ENCODE measurements at regions of chr1 and their contacts with region 1.

Region 1: DNA sequence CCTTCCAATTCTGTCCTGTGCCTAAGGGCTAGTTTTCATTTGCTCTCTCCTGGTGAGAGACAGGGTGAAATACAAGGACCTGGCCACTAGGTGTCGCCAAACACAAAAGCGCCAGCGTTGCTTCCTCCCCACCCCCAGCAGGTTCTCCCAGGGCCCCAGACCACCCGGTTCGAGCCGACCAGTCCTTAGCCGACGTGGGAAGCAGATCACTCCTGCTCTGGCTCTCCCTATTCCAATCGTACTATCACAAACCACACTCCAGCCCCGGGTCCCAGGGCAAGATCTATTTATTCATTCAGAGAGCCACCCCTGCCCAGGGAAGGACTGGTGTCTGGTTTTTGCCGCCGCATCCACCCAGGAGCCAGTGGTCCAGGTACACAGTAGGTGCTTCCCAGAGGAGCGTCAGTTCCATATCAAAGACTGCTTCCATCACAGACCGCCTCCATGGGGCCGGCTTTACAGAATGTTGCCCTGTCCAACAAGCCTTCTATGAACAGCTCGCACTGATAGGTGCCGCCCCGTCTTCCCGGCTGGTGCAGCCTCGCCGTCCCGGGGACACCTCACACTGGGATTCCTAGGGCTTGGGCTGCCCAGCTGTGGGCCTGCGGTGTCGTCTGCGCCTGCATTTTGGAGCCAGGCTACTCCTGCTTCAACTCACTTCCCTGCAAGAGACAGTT is 35.0 kb downstream of the CTNNBIP1 start:
- DNase-seq: peak; percentile 71
- H3K4me3 ChIP-seq: no peak overlapping the region
- H3K27ac ChIP-seq: no peak overlapping the region
- H3K4me1 ChIP-seq: no peaks in the 10 kb centered on the region
- H3K27me3 ChIP-seq: no peaks in the 10 kb centered on the region
- CTCF ChIP-seq: peak; percentile 85 to 92
- POLR2A ChIP-seq: no peak

Region 2: GRCh38 chr1:9890224-9890731 is 15.2 kb after region 1 on chr1:
- CTCF ChIA-PET with region 1: interaction called, 6 read pairs
- POLR2A ChIA-PET with region 1: no interaction called
- dilution Hi-C with region 1: no loop called
- intact Hi-C with region 1: loop called (anchors 2 kb)
- DNase-seq: peak; percentile 63
- H3K4me3 ChIP-seq: no peak overlapping the region
- H3K27ac ChIP-seq: peak overlapping the region; percentile 52
- H3K4me1 ChIP-seq: peaks cover 43% of the 10 kb centered on the region
- H3K27me3 ChIP-seq: no peaks in the 10 kb centered on the region
- CTCF ChIP-seq: no peak
- POLR2A ChIP-seq: no peak

Region 3: DNA sequence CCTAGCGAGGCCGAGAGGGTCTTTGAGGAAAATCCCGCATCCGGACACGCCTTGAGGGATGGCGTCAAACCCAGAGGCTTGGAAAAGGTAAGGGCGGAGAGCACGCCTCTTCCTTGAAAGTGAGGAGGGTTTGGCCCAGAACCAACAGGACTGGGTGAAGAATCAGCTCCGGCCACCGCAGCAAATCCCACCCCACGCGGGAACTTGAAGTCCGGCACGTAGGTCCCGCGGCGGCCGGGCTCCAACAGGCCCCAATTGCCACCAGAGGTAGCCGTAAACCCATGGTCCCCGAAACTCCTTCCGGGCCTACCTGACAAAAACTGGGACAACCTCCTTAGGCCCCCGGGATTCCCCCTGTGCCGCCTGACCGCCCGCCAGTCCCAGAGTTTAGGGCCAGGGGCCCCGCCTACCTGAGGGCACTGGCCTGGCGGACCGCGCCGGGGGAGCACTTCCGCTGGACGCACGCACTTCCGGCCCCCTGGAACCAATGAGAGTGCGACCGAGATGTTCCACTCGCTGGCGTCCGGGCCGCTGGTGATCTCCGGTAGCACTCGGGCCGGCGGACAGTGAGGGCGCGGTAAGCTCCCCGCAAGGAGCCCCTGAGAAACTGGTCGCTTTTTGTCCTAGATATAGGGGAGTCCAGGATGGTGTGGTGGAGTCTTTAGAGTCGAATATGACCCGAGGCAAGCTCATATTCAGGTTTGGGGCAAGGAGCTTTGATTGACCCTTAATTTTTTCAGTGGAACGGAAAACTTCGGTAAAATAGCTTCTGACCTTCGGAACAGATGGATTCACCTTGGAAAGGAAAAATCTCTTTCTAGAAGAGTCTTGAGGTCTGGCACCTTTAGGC is 68.1 kb after region 1 on chr1 and contains the starts of genes LZIC and NMNAT1:
- CTCF ChIA-PET with region 1: interaction called, 51 read pairs
- POLR2A ChIA-PET with region 1: interaction called, 3 read pairs
- dilution Hi-C with region 1: no loop called
- intact Hi-C with region 1: loop called (anchors 1 kb)
- DNase-seq: peak; percentile 94
- H3K4me3 ChIP-seq: peak within 1 kb of the TSS; percentile 79 to 99 (median 95)
- H3K27ac ChIP-seq: peak within 1 kb of the TSS; percentile 91
- H3K4me1 ChIP-seq: peaks cover 4% of the 10 kb centered on the region
- H3K27me3 ChIP-seq: no peaks in the 10 kb centered on the region
- CTCF ChIP-seq: no peak
- POLR2A ChIP-seq: peak; percentile 96
- total RNA-seq, gene LZIC: 22.7 and 23.4 TPM in 2 replicates
- total RNA-seq, gene NMNAT1: 7.4 and 9.8 TPM in 2 replicates

Measured in endothelial cell of umbilical vein (primary cell).